MCF 10A (cell line): ENCODE measurements at regions of chr6 and their contacts with region 1.

Region 1: DNA sequence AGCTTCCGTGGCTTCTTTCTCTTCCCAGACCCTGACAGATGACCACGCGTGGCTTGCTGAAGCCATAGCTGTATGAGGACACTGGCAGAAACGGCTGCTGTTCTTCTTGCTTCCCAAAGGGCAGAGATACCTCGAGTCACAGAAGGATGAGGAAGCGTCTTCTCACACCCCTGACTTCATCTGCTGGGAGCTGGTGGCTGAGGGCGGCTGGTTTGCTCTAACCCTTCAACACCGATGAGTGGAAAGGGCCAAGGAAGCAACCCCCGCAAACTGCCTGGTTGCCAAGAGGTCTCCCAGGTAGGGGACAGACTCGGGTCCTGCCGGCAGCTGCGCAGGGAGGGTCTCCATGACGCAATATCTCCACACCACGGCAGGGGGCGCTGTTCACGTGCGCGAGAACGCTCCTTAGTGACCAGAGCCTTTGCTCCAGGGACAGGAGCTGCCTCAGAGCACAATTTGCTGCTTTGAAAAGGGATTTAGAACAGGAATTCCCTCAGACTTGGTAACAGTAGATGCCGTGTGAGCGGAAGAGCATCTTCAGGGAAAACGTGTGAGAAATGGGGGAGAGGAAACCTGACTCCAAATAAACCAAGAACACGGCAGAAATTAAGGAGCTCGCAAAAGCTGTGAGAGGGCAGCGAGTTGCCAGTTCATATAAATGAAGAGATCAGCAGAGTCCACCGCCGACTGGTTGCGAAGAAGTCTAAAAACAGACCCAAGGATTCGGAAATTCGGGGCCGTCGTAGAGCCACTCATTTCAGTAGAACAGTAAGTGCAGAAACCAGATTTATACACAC is 80.2 kb downstream of the ERMARD start:
- DNase-seq: peak; percentile 66
- H3K4me3 Mint-ChIP-seq: no peak overlapping the region
- H3K27ac Mint-ChIP-seq: no peak overlapping the region
- H3K4me1 Mint-ChIP-seq: peaks cover 6% of the 10 kb centered on the region
- H3K27me3 Mint-ChIP-seq: peaks cover 73% of the 10 kb centered on the region
- CTCF ChIP-seq: peak; percentile 90

Region 2: DNA sequence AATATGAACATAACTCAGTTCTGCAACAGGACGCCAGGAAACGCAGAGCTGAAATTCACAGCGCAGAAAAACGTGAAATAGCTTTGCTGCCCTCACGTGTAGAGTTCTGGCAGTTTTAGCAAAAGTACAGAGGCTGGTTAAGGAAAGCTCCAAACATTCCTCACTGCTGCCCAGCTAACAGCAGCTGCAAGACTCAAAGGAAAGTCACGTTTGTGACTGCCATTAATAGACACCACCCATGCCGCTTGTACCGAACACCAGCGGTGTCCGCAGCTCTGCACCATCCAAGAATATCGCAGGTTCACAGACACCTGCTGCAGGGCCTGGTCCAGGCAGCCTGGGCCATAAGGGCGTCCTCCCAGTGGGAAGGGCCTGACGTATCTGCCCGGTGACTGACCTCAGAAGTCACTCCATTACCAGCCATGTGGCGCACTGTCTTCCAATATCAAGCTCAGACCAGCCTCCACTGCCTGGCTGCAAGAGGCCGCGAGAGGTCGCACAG is 191.2 kb before region 1 on chr6:
- CTCF ChIA-PET with region 1: no interaction called
- POLR2A ChIA-PET with region 1: no interaction called
- intact Hi-C with region 1: no loop called
- DNase-seq: no peak
- H3K4me3 Mint-ChIP-seq: no peak overlapping the region
- H3K27ac Mint-ChIP-seq: no peak overlapping the region
- H3K4me1 Mint-ChIP-seq: no peaks in the 10 kb centered on the region
- H3K27me3 Mint-ChIP-seq: no peaks in the 10 kb centered on the region
- CTCF ChIP-seq: no peak

Region 3: DNA sequence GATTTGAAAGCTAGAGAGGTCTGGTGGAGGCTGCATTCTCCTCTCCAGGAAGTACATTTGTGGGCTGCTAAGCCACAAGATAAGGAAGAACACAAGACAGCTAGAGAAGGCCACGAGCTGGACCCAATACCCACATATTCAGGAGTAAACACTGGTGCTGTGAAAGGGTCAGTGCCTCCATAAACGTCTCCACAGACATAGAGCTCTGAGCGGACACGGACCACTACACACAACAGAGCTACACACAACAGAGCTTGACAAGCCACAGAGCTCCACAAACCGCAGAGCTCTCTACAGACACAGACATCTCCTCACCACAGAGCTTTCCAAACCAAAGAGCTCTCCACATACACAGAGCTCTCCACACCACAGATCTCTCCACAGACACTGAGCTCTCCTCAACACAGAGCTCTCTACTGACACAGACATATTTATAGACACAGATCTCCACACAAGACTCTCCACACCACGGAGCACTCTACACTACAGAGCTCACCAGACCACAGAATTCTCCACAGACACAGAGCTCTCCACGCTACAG is 28.3 kb before region 1 on chr6:
- CTCF ChIA-PET with region 1: interaction called, 18 read pairs
- POLR2A ChIA-PET with region 1: no interaction called
- intact Hi-C with region 1: no loop called
- DNase-seq: no peak
- H3K4me3 Mint-ChIP-seq: no peak overlapping the region
- H3K27ac Mint-ChIP-seq: no peak overlapping the region
- H3K4me1 Mint-ChIP-seq: no peaks in the 10 kb centered on the region
- H3K27me3 Mint-ChIP-seq: peaks cover 47% of the 10 kb centered on the region
- CTCF ChIP-seq: no peak

Region 4: DNA sequence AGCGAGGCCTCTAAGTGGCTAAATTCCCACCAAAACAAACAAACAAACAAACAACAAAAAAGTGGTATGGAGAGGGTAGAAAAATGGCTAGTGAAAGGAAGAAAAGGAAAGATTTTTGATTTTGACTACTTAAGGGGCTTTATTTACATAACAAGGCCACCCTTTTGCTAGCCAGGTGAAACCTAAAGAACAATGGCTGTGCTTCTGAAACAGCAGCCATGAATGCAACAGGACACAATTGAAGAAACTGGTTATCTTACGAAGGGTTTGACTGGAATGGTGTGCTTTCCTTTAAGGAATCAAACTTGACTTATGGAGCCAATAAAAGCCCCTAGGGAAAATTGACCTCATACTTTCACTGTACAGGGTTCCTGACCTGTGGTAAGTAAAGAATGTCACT is 11.3 kb before region 1 on chr6:
- CTCF ChIA-PET with region 1: interaction called, 14 read pairs
- POLR2A ChIA-PET with region 1: no interaction called
- intact Hi-C with region 1: no loop called
- DNase-seq: no peak
- H3K4me3 Mint-ChIP-seq: no peak overlapping the region
- H3K27ac Mint-ChIP-seq: no peak overlapping the region
- H3K4me1 Mint-ChIP-seq: no peaks in the 10 kb centered on the region
- H3K27me3 Mint-ChIP-seq: peaks cover 99% of the 10 kb centered on the region
- CTCF ChIP-seq: no peak

Region 5: DNA sequence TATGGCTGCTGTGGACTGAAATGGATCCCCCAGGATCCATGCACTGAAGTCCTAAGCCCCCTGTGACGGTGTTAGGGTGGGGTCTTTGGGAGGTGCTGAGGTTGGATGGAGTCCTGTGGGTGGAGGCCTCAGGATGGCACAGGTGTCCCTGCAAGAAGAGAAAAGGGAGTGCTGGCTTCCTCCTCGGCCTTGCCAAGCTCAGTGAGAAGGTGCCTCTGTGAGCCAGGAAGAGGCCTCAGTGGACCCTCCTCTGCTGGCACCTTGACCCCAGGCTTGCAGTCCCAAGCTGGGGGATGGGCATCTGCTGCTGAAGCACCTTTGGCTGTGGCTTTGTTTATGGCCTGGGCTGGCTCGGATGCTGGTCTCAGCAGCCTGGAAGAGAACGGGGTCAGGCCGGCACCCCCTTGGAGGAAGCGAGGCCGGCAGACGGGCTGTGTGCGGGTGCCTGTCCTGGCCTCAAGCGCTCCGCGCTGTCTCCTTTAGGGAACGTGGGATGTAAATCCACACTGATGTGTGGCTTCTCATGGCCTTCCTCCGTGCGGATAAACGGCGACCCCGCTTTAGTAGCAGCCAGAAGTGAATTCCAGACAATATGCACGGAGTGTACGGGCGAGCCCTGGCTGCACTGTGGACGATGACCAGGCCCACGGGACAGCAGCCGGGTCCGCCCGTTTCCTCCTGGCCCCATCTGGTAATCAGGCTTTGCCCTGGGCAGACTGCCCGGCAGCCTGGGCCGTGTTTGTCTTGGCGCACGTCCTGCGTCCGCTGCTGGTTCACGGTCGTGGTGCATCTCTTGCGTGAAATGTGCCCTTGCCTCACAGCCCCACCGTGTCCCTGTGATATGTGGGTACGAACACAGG is 102.4 kb after region 1 on chr6:
- CTCF ChIA-PET with region 1: interaction called, 3 read pairs
- POLR2A ChIA-PET with region 1: no interaction called
- intact Hi-C with region 1: loop called (anchors 10 kb)
- DNase-seq: peak; percentile 57
- H3K4me3 Mint-ChIP-seq: no peak overlapping the region
- H3K27ac Mint-ChIP-seq: no peak overlapping the region
- H3K4me1 Mint-ChIP-seq: no peaks in the 10 kb centered on the region
- H3K27me3 Mint-ChIP-seq: peaks cover 35% of the 10 kb centered on the region
- CTCF ChIP-seq: no peak